HEK293 (cell line): ENCODE measurements at regions of chr19 and their contacts with region 1.

Region 1: DNA sequence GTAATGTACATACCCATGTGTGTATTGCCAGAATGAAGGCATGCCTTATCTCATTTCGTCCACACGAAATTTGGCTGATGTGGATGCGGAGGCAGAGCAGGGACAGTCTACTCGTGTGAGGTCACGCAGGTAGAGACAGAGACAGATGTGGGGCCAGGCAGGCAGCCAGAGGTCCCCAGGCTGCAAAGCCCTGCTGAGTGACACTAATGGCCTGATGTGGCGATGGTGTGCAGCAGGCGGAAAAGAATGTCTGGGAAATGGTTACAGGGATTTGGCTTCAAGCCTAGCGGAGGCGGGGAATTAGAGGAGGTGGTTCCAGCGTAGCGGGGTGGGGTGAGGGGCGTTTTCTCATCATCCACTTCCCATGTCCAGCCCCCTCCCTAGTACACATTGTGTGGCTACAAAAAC is 4.2 kb upstream of the IZUMO2 start:
- H3K4me3 ChIP-seq: no peak overlapping the region
- H3K27ac ChIP-seq: no peak overlapping the region
- H3K4me1 ChIP-seq: peaks cover 5% of the 10 kb centered on the region; the same call in 1 of the 2 replicates
- CTCF ChIP-seq: no peak

Region 2: GRCh38 chr19:50155520-50156109 is 11.7 kb before region 1 on chr19:
- CTCF ChIA-PET with region 1: interaction called, 12 read pairs
- POLR2A ChIA-PET with region 1: no interaction called
- H3K4me3 ChIP-seq: no peak overlapping the region
- H3K27ac ChIP-seq: no peak overlapping the region
- H3K4me1 ChIP-seq: no peaks in the 10 kb centered on the region; the same call in 1 of the 2 replicates
- CTCF ChIP-seq: peak; percentile 23; the same call in 1 of the 2 replicates

Region 3: DNA sequence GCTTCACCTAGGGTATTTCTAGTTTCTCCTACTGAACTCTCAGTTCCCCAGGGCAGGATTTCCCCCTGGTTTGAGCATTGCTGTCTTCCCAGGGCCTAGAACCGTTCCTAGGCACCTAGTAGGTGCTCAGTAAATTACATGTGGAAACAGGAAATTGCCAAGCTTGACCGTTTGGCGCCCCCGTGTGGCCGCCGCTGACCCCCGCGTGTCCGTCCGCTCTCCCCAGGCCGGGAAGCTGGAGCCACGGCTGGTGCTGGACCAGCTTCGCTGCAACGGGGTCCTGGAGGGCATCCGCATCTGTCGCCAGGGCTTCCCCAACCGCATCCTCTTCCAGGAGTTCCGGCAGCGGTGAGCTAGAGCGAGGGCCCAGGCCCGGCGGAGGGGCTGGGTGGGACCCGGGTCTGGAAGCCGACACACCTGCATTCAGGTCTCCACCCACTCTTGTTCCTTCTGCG is 91.6 kb after region 1 on chr19:
- CTCF ChIA-PET with region 1: interaction called, 24 read pairs
- POLR2A ChIA-PET with region 1: interaction called, 3 read pairs
- H3K4me3 ChIP-seq: no peak overlapping the region
- H3K27ac ChIP-seq: no peak overlapping the region
- H3K4me1 ChIP-seq: no peaks in the 10 kb centered on the region
- CTCF ChIP-seq: peak; percentile 25; the same call in 1 of the 2 replicates